Natural killer cell (primary cell): ENCODE measurements at regions of chr2 and their contacts with region 1.

Region 1: GRCh38 chr2:223837287-223838061 is at the start of gene AP1S3:
- DNase-seq: peak; percentile 76 to 91
- ATAC-seq: peak; percentile 88 to 92 (median 89)
- H3K4me3 ChIP-seq: peak within 1 kb of the TSS; percentile 65
- H3K4me3 Mint-ChIP-seq: peak within 1 kb of the TSS; percentile 92
- H3K27ac ChIP-seq: peak within 1 kb of the TSS; percentile 74
- H3K27ac Mint-ChIP-seq: peak within 1 kb of the TSS; percentile 84 to 86
- H3K4me1 ChIP-seq: peaks cover 21% of the 10 kb centered on the region
- H3K4me1 Mint-ChIP-seq: peaks cover 12 to 15% of the 10 kb centered on the region in 2 donors
- H3K27me3 ChIP-seq: no peaks in the 10 kb centered on the region
- H3K27me3 Mint-ChIP-seq: no peaks in the 10 kb centered on the region
- CTCF ChIP-seq: no peak
- total RNA-seq, gene AP1S3: 4.5 to 5.2 (median 5.0) TPM

Region 2: GRCh38 chr2:223647258-223647952 is 190.1 kb before region 1 on chr2:
- intact Hi-C with region 1: no loop called
- DNase-seq: no peak
- ATAC-seq: no peak
- H3K4me3 ChIP-seq: no peak overlapping the region
- H3K4me3 Mint-ChIP-seq: no peak overlapping the region
- H3K27ac ChIP-seq: no peak overlapping the region
- H3K27ac Mint-ChIP-seq: no peak overlapping the region
- H3K4me1 ChIP-seq: no peaks in the 10 kb centered on the region
- H3K4me1 Mint-ChIP-seq: no peaks in the 10 kb centered on the region
- H3K27me3 ChIP-seq: no peaks in the 10 kb centered on the region
- H3K27me3 Mint-ChIP-seq: peaks cover 0 to 17% of the 10 kb centered on the region in 2 donors
- CTCF ChIP-seq: no peak

Region 3: GRCh38 chr2:223957092-223957851 is 119.8 kb after region 1 on chr2 and contains the start of gene MRPL44:
- intact Hi-C with region 1: loop called (anchors 1 kb)
- DNase-seq: peak; percentile 98
- ATAC-seq: peak; percentile 99 to 100 (median 100)
- H3K4me3 ChIP-seq: peak within 1 kb of the TSS; percentile 97
- H3K4me3 Mint-ChIP-seq: peak within 1 kb of the TSS; percentile 97
- H3K27ac ChIP-seq: peak within 1 kb of the TSS; percentile 79
- H3K27ac Mint-ChIP-seq: peak within 1 kb of the TSS; percentile 93 to 95
- H3K4me1 ChIP-seq: peaks cover 16% of the 10 kb centered on the region
- H3K4me1 Mint-ChIP-seq: peaks cover 46 to 56% of the 10 kb centered on the region in 2 donors
- H3K27me3 ChIP-seq: no peaks in the 10 kb centered on the region
- H3K27me3 Mint-ChIP-seq: no peaks in the 10 kb centered on the region
- CTCF ChIP-seq: no peak
- total RNA-seq, gene MRPL44: 27.6 to 35.1 (median 31.0) TPM